HepG2 (cell line): ENCODE measurements at regions of chrX and their contacts with region 1.

Region 1: DNA sequence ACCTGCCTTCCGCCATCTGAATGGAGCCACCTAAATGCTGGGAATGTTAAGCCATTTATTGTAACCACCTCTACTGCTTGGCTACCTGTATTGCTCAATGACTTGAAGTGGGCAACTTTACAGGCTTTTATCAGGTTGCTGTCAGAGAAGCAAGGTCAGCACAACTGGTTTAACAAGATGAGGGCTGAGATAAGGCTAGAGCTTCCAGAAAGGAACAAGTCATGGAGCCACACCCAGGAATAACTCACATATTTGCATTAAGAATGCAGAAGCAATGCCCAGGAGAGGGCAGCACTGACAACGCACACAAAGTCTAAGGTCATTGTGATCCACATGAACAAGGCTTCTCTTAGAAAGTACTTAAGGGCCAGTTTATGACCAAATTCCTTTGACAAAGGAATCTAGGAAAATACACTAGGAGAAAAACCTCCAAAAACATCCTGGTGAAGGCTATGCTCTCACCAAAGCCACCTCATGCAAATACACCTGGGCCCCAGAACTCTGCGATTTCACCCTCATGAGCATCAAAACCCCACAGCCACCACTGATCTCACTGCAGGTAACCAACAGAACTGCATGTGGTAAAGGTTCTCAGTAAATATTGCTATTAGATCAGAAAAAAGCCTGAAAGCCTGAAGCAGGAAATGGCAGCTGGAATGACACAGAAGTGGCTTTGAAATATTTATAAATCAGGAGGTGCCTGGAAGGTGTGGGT is 15.0 kb upstream of the STS start:
- DNase-seq: peak; percentile 80
- ATAC-seq: peak; percentile 94
- H3K4me3 ChIP-seq: no peak overlapping the region
- H3K27ac ChIP-seq: peak overlapping the region; percentile 20
- H3K4me1 ChIP-seq: peaks cover 25% of the 10 kb centered on the region
- H3K27me3 ChIP-seq: no peaks in the 10 kb centered on the region
- CTCF ChIP-seq: peak; percentile 61
- EP300 ChIP-seq: no peak
- POLR2A ChIP-seq: no peak
- RAD21 ChIP-seq: no peak

Region 2: GRCh38 chrX:7170903-7171302 is 38.4 kb after region 1 on chrX:
- CTCF ChIA-PET with region 1: no interaction called
- POLR2A ChIA-PET with region 1: no interaction called
- in situ Hi-C with region 1: no loop called
- intact Hi-C with region 1: loop called (anchors 2 kb)
- DNase-seq: peak; percentile 29
- ATAC-seq: no peak
- H3K4me3 ChIP-seq: no peak overlapping the region
- H3K27ac ChIP-seq: no peak overlapping the region
- H3K4me1 ChIP-seq: no peaks in the 10 kb centered on the region
- H3K27me3 ChIP-seq: no peaks in the 10 kb centered on the region
- CTCF ChIP-seq: peak; percentile 39
- EP300 ChIP-seq: no peak
- POLR2A ChIP-seq: no peak
- RAD21 ChIP-seq: 0 out of 2 replicates have a peak, but pooled peaks have one; percentile 23

Region 3: DNA sequence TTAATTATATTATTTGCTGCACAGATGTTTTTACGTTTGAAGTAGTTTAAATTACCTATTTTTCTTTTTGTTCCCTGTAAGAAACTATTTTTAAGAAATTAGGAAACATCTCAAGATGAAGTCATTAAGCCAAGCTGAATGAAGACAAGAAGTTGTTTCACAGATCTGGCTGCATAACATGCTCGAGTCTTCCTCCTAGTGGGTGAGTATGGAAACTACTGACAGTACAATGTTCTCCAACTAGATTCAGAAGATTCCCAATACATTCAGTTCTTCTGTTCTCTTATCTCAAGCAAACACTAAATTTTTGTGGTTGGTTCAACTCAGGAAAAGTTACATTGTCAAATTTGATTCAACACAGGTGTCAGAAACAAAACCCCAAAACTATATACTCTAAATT is 453.6 kb after region 1 on chrX:
- CTCF ChIA-PET with region 1: no interaction called
- POLR2A ChIA-PET with region 1: no interaction called
- in situ Hi-C with region 1: no loop called
- intact Hi-C with region 1: loop called (anchors 10 kb)
- DNase-seq: peak; percentile 1
- ATAC-seq: no peak
- H3K4me3 ChIP-seq: no peak overlapping the region
- H3K27ac ChIP-seq: no peak overlapping the region
- H3K4me1 ChIP-seq: no peaks in the 10 kb centered on the region
- H3K27me3 ChIP-seq: no peaks in the 10 kb centered on the region
- CTCF ChIP-seq: peak; percentile 39
- EP300 ChIP-seq: no peak
- POLR2A ChIP-seq: no peak
- RAD21 ChIP-seq: no peak